HepG2 (cell line): ENCODE measurements at regions of chr18 and their contacts with region 1.

Region 1: DNA sequence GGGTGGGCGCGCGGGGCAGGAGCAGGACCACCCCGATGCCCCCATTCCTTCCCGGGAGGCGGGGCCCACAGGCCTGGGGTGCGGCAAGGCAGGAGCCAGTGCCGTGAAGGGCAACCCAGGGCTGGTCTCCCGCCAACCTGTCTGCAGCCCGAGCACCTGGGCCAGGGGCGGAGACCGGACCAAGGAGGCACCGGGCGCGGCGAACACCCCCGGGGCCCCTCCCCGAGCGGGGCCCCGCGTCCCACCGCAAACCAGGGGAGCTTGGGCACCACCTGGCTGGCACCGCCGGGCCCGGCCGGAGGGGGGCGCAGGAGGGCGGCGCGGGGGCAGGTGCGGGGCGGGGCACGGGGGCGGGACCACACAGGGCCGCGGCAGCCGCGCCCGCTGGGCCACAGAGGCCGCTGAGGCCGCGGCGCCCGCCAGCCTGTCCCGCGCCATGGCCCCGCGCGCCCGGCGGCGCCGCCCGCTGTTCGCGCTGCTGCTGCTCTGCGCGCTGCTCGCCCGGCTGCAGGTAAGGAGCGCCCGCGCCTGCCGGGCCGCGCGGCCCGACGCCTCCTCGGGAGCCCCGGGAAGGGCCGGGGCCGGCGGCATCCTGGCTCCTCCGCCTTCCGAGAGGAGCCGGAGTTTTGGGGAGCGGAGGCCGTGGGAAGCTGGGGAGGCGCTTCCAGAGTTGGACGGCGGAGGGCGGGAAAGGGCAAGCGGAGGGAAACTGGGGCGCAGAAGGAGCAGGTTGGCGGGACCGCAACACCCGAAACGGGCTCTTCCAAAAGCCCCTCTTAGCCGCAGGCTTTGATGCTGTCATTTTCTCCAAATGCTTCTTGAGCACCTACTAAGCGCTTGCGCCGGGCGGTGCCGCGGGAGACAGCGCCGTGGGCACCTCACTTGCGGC is at the start of gene TNFRSF11A:
- DNase-seq: no peak
- ATAC-seq: peak; percentile 91
- H3K4me3 ChIP-seq: peak within 1 kb of the TSS; percentile 67 to 90 (median 79)
- H3K27ac ChIP-seq: no peak within 1 kb of the TSS
- H3K4me1 ChIP-seq: peaks cover 66% of the 10 kb centered on the region
- H3K27me3 ChIP-seq: peaks cover 0 to 7% of the 10 kb centered on the region in 2 experiments; a peak in 2 of 5 replicates
- CTCF ChIP-seq: peak; percentile 53
- EP300 ChIP-seq: no peak
- POLR2A ChIP-seq: peak in 1 of 2 experiments; percentile 29; a peak in 1 of 4 replicates
- RAD21 ChIP-seq: peak; percentile 39; the same call in 1 of the 2 replicates
- total RNA-seq, gene TNFRSF11A: 3.6 and 4.6 TPM in 2 replicates

Region 2: GRCh38 chr18:62399781-62400308 is 74.7 kb after region 1 on chr18:
- CTCF ChIA-PET with region 1: interaction called, 5 read pairs
- POLR2A ChIA-PET with region 1: no interaction called
- in situ Hi-C with region 1: loop called (anchors 10 kb)
- intact Hi-C with region 1: loop called (anchors 2 kb)
- DNase-seq: peak; percentile 79
- ATAC-seq: peak; percentile 95
- H3K4me3 ChIP-seq: peak overlapping the region in 1 of 3 experiments; percentile 34; a peak in 2 of 6 replicates
- H3K27ac ChIP-seq: no peak overlapping the region
- H3K4me1 ChIP-seq: peaks cover 47% of the 10 kb centered on the region
- H3K27me3 ChIP-seq: no peaks in the 10 kb centered on the region
- CTCF ChIP-seq: peak; percentile 75
- EP300 ChIP-seq: peak in 1 of 2 experiments; percentile 52; a peak in 1 of 4 replicates
- POLR2A ChIP-seq: no peak
- RAD21 ChIP-seq: no peak; the same call in 1 of the 2 replicates